ENCODE measurements at regions of chr7 and their contacts with region 1.

Region 1: DNA sequence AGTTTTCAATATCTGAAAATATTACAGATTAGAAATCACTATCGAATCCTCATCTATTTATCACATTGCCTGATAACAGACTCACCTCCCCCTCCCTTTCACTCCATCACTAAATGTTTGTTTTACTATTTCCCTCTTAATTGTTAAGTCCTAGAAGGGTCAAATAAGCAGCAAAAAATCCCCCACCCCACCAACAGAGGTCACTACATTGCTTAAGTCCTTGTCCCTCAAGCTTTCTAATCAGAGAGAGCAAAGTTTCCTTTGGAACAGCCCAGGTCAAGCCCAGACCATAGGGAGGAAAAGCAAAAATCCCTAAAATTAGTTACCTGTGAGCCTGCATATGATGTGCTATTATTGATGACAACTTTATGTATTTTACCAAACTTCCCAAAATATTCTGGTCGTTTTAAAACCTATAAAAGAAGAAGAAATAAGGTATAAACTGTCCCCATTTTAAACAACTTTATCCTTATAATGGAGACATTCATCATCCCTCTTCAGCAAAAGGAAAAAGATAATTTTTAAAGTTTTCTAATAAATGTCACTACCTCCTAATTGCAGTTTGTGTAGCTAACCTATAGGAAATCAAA is 95.0 kb downstream of the CNOT4 start:
- DNase-seq: peak; percentile 67 to 88 (median 76)
- ATAC-seq: peak; percentile 99
- H3K4me3 ChIP-seq: no peak overlapping the region
- H3K27ac ChIP-seq: no peak overlapping the region
- H3K4me1 ChIP-seq: peaks cover 0 to 5% of the 10 kb centered on the region in 2 experiments; a peak in 2 of 5 replicates
- H3K27me3 ChIP-seq: no peaks in the 10 kb centered on the region
- CTCF ChIP-seq: peak; percentile 74 to 92 (median 90)
- EP300 ChIP-seq: no peak
- POLR2A ChIP-seq: no peak
- RAD21 ChIP-seq: peak; percentile 70 to 88

Region 2: GRCh38 chr7:135490783-135491182 is 75.8 kb after region 1 on chr7:
- CTCF ChIA-PET with region 1: no interaction called
- POLR2A ChIA-PET with region 1: no interaction called
- in situ Hi-C with region 1: no loop called
- intact Hi-C with region 1: loop called (anchors 5 kb)
- DNase-seq: peak; percentile 58 to 93 (median 68)
- ATAC-seq: peak; percentile 72
- H3K4me3 ChIP-seq: no peak overlapping the region
- H3K27ac ChIP-seq: peak overlapping the region; percentile 49; the same call in 2 of the 3 replicates
- H3K4me1 ChIP-seq: peaks cover 11 to 22% of the 10 kb centered on the region in 2 experiments
- H3K27me3 ChIP-seq: no peaks in the 10 kb centered on the region
- CTCF ChIP-seq: no peak
- EP300 ChIP-seq: peak; percentile 51
- POLR2A ChIP-seq: no peak
- RAD21 ChIP-seq: 0 out of 4 replicates have a peak, but pooled peaks of 1 of the 2 experiments have one; percentile 13

Region 3: GRCh38 chr7:135558337-135558767 is 143.4 kb after region 1 on chr7:
- CTCF ChIA-PET with region 1: interaction called, 23 read pairs
- POLR2A ChIA-PET with region 1: no interaction called
- in situ Hi-C with region 1: no loop called
- intact Hi-C with region 1: loop called (anchors 1 kb)
- DNase-seq: peak; percentile 80 to 94 (median 86)
- ATAC-seq: peak; percentile 90
- H3K4me3 ChIP-seq: peak overlapping the region; percentile 63
- H3K27ac ChIP-seq: peak overlapping the region; percentile 94
- H3K4me1 ChIP-seq: peaks cover 4 to 8% of the 10 kb centered on the region in 2 experiments
- H3K27me3 ChIP-seq: no peaks in the 10 kb centered on the region; a peak in 1 of 5 replicates
- CTCF ChIP-seq: peak; percentile 87 to 94 (median 89)
- EP300 ChIP-seq: no peak; the same call in 1 of the 2 replicates
- POLR2A ChIP-seq: peak; percentile 56
- RAD21 ChIP-seq: peak; percentile 86 to 93

Region 4: GRCh38 chr7:135645296-135645904 is 230.5 kb after region 1 on chr7:
- CTCF ChIA-PET with region 1: interaction called, 3 read pairs
- POLR2A ChIA-PET with region 1: no interaction called
- in situ Hi-C with region 1: no loop called
- intact Hi-C with region 1: loop called (anchors 10 kb)
- DNase-seq: peak; percentile 42 to 61 (median 52)
- ATAC-seq: peak; percentile 81
- H3K4me3 ChIP-seq: no peak overlapping the region
- H3K27ac ChIP-seq: no peak overlapping the region
- H3K4me1 ChIP-seq: peaks cover under 1 to 6% of the 10 kb centered on the region in 2 experiments; a peak in 2 of 5 replicates
- H3K27me3 ChIP-seq: no peaks in the 10 kb centered on the region
- CTCF ChIP-seq: peak; percentile 64 to 82 (median 70); a peak in 5 of 6 replicates
- EP300 ChIP-seq: no peak
- POLR2A ChIP-seq: no peak
- RAD21 ChIP-seq: peak; percentile 69 to 72